Mammary epithelial cell (primary cell): ENCODE measurements at regions of chr5 and their contacts with region 1.

Region 1: DNA sequence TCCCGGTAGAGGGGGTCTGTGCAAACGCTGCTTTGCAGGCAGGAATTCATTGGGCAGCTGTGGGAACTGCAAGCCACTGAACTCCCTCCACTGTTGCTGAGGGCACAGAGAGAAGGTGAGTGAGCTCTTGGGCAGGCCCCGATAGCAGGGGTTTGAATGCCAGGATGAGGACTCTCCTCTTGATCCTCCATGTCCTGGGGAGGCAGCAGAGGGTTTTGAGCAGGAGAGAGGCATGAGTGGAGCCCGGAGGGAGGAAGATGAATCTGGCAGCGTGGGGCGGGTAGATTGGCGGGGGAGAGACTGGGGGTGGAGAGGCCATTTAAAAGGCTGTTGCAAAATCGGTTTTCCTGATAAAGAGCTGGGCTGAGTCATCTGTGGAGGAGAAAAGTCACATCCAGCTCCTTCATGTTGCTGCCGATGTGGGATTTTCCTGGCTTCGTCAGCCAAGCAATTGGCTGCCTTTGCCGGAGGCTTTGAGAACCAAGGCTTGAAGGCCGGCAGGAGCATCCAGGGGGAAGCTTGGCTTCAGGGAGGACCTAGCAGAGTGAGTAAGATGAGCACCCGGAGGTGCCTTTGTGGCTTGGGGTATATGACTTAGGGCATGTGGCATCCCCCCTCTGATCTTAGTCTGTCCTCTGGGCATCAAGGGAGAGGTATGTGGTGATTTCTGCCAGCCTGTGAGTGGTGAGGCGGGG is at the start of gene SYNPO:
- DNase-seq: peak; percentile 97
- H3K4me3 ChIP-seq: peak within 1 kb of the TSS in 1 of 3 experiments; percentile 23
- H3K27ac ChIP-seq: peak within 1 kb of the TSS; percentile 49
- H3K4me1 ChIP-seq: peaks cover 81% of the 10 kb centered on the region
- H3K27me3 ChIP-seq: no peaks in the 10 kb centered on the region
- CTCF ChIP-seq: no peak
- total RNA-seq, gene SYNPO: 1.3 to 5.3 TPM

Region 2: DNA sequence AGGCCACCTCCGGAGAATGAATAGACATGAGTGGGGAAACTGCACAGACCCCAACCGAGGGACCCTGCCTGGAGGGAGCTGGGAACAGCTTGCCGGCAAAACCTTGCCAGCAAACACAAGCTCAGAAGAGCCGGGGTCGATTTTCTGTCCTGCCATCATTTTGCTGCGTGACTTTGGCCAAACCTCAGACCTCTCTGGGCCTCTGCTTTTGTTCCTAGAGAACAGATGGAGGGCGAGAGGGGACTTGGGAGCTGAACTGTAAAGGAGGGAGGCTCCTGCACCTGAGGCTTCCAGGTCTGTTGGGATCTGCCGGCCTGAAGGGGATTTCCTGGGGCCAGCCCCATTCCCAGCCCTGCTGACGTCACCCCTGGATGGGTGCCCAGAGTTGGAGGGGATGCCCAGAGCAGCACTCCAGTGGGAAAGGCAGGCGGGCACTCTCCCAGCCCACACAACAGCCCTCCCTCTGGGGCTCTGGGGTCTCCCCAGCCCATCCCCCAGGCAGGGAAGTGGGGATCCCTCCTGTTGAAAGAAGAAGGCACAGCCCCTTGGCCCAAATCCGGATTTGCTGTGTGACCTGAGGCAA is 40.5 kb before region 1 on chr5:
- CTCF ChIA-PET with region 1: no interaction called
- dilution Hi-C with region 1: loop called (anchors 5 kb)
- in situ Hi-C with region 1: no loop called
- intact Hi-C with region 1: loop called (anchors 2 kb)
- DNase-seq: peak; percentile 94
- H3K4me3 ChIP-seq: peak overlapping the region in 1 of 3 experiments; percentile 27
- H3K27ac ChIP-seq: peak overlapping the region; percentile 86
- H3K4me1 ChIP-seq: peaks cover 35% of the 10 kb centered on the region
- H3K27me3 ChIP-seq: no peaks in the 10 kb centered on the region
- CTCF ChIP-seq: no peak

Region 3: DNA sequence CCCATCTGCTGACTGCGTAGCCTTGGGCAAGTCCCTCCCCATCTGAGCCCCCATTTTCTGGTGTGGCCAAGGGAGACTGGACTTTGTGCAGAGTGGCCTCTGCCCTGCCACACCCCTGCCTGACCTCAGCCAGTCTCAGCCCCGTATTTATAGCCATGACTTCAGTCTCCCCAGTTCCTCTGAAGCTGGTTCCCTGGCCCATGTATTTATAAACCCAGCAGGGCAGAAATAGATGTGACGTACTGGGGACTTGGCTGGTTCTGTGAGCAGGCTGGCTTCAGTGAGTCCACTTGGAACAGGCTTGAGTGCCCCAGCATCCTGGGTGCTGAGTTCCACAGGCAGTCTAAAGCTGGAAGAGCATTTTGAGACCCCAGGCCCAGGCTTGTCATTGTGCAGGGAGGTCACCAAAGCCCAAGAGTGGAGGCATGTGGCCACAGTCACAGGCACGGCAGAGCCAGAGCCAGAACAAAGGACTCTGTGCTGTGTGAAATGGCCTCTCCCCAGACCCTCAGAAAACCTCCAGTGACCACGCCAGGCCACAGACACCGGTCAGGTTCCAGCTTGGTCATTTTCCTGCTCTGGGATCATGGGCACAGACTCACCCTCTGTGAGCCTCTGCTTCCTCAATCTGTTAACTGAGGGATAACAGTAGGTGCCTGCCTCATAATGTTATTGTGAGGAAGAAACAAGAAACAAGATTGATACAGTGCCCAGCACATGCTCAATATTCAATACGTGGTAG is 30.4 kb before region 1 on chr5:
- CTCF ChIA-PET with region 1: no interaction called
- dilution Hi-C with region 1: loop called (anchors 5 kb)
- in situ Hi-C with region 1: no loop called
- intact Hi-C with region 1: no loop called
- DNase-seq: no peak
- H3K4me3 ChIP-seq: no peak overlapping the region
- H3K27ac ChIP-seq: no peak overlapping the region
- H3K4me1 ChIP-seq: peaks cover 5% of the 10 kb centered on the region
- H3K27me3 ChIP-seq: no peaks in the 10 kb centered on the region
- CTCF ChIP-seq: no peak